Aorta (tissue), 5 donors: ENCODE measurements at regions of chr16 and their contacts with region 1.

Region 1: GRCh38 chr16:75110637-75111513 is 5.7 kb downstream of the LDHD start:
- DNase-seq: peak; percentile 93 to 96
- ATAC-seq: peak; percentile 91
- H3K4me3 ChIP-seq: no peak overlapping the region
- H3K27ac ChIP-seq: peak overlapping the region in 1 of 2 donors; percentile 15
- H3K4me1 ChIP-seq: peaks cover 0 to 3% of the 10 kb centered on the region in 2 donors
- H3K27me3 ChIP-seq: no peaks in the 10 kb centered on the region

Region 2: GRCh38 chr16:74998481-74999218 is 112.2 kb before region 1 on chr16 and contains the start of gene ZNRF1:
- intact Hi-C with region 1: loop called (anchors 1 kb)
- DNase-seq: peak; percentile 88 to 94
- ATAC-seq: peak; percentile 94
- H3K4me3 ChIP-seq: peak within 1 kb of the TSS; percentile 78 to 95
- H3K27ac ChIP-seq: peak within 1 kb of the TSS in 1 of 2 donors; percentile 12
- H3K4me1 ChIP-seq: no peaks in the 10 kb centered on the region
- H3K27me3 ChIP-seq: no peaks in the 10 kb centered on the region
- total RNA-seq, gene ZNRF1: 20.8 to 26.3 TPM

Region 3: GRCh38 chr16:75064403-75065148 is 46.3 kb before region 1 on chr16:
- intact Hi-C with region 1: no loop called
- DNase-seq: no peak
- ATAC-seq: no peak
- H3K4me3 ChIP-seq: no peak overlapping the region
- H3K27ac ChIP-seq: no peak overlapping the region
- H3K4me1 ChIP-seq: no peaks in the 10 kb centered on the region
- H3K27me3 ChIP-seq: no peaks in the 10 kb centered on the region

Region 4: GRCh38 chr16:75342308-75342829 is 231.5 kb after region 1 on chr16:
- intact Hi-C with region 1: no loop called
- DNase-seq: no peak
- ATAC-seq: peak; percentile 79
- H3K4me3 ChIP-seq: no peak overlapping the region
- H3K27ac ChIP-seq: peak overlapping the region; percentile 60 to 66
- H3K4me1 ChIP-seq: peaks cover 8 to 16% of the 10 kb centered on the region in 2 donors
- H3K27me3 ChIP-seq: no peaks in the 10 kb centered on the region